H1 (cell line): ENCODE measurements at regions of chr3 and their contacts with region 1.

Region 1: GRCh38 chr3:185733980-185734724 is 90.7 kb downstream of the IGF2BP2 start:
- DNase-seq: no peak
- H3K4me3 ChIP-seq: no peak overlapping the region
- H3K27ac ChIP-seq: no peak overlapping the region
- H3K4me1 ChIP-seq: peaks cover 0 to 15% (median 4%) of the 10 kb centered on the region in 4 experiments; a peak in 5 of 7 replicates
- H3K27me3 ChIP-seq: no peaks in the 10 kb centered on the region
- CTCF ChIP-seq: peak; percentile 8 to 75 (median 71)
- EP300 ChIP-seq: no peak
- POLR2A ChIP-seq: no peak
- RAD21 ChIP-seq: peak; percentile 91 to 93

Region 2: DNA sequence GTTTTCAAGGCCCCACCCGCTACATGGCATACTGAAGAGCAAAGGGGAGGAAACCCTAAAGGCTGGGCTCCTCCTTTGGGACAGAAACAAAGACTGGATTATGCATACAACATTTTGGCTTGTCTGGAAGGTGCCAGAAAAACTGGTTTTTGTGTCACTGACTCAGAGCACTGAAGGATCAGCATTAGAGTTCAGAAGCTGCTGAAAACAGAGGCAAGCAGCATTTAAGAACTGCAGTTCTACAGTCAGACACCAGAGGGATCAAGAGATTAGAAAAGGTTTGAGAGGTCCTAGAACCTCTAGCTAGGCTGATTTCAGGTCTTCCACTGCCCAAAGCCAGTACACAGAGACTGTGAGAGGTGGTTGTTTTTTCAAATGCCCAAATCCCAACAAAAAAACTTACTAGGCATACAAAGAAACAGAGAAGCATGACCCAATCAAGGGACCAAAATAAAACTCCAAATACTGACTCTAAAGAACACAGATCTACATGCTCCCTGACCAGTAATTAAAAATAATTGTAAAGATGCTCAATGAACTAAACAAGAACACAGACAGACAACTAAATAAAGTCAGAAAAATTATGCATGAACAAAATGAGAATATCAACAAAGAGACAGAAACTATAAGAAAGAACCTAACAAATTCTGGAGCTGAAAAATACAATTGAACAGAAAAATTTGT is 56.9 kb before region 1 on chr3:
- CTCF ChIA-PET with region 1: interaction called, 26 read pairs
- POLR2A ChIA-PET with region 1: no interaction called
- DNase-seq: no peak
- H3K4me3 ChIP-seq: no peak overlapping the region
- H3K27ac ChIP-seq: no peak overlapping the region
- H3K4me1 ChIP-seq: no peaks in the 10 kb centered on the region
- H3K27me3 ChIP-seq: no peaks in the 10 kb centered on the region
- CTCF ChIP-seq: peak in 2 of 3 experiments; percentile 71 to 83; a peak in 3 of 4 replicates
- EP300 ChIP-seq: no peak
- POLR2A ChIP-seq: no peak
- RAD21 ChIP-seq: peak; percentile 79 to 85

Region 3: DNA sequence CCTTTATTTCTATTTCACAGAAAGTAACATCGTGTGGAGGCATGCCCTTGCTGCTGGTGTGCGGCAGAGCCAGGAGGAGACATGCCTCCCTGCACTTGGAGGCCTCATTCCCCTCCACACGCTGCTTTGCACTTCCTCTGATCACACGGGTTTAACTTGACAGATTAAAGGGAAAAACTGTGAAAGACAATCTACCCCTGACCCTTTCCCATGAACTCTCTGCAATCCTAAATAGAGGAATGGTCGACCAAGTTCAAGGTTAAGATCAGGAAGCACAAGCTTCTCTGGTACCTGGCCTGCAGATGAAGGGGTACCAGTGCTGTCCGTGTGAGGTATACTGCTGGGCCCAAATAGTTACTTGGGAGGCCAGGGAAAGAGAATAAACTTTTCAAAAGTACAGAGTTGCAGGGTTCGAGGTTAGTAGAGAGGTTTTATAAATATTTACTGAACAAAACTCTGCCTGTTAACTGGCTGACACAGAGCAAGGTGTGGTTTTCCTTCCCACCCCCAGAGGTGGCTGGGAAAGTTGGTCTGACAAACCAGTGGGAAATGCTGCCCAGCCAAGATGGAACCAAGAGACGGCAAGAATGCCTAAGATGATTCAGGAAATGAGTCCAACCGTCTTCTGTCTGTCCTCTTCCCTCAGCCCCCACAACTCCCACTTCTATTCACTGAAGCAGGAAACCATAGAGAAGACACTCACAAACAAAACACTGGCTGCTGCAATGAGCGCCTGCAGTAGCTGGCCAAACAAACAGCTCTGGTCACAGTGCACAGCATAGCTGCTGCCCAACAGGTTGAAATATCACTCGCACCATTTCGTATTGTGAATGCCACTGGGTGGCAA is 11.1 kb after region 1 on chr3:
- CTCF ChIA-PET with region 1: interaction called, 24 read pairs
- POLR2A ChIA-PET with region 1: interaction called, 14 read pairs
- DNase-seq: no peak
- H3K4me3 ChIP-seq: no peak overlapping the region
- H3K27ac ChIP-seq: no peak overlapping the region
- H3K4me1 ChIP-seq: peaks cover 2 to 18% (median 5%) of the 10 kb centered on the region in 4 experiments; a peak in 5 of 7 replicates
- H3K27me3 ChIP-seq: no peaks in the 10 kb centered on the region
- CTCF ChIP-seq: no peak
- EP300 ChIP-seq: no peak
- POLR2A ChIP-seq: no peak
- RAD21 ChIP-seq: no peak

Region 4: GRCh38 chr3:185770109-185770508 is 36.0 kb after region 1 on chr3:
- CTCF ChIA-PET with region 1: interaction called, 345 read pairs
- POLR2A ChIA-PET with region 1: interaction called, 6 read pairs
- DNase-seq: peak in 1 of 2 experiments; percentile 45
- H3K4me3 ChIP-seq: no peak overlapping the region
- H3K27ac ChIP-seq: no peak overlapping the region
- H3K4me1 ChIP-seq: peaks cover 2 to 23% (median 5%) of the 10 kb centered on the region in 4 experiments; a peak in 5 of 7 replicates
- H3K27me3 ChIP-seq: no peaks in the 10 kb centered on the region
- CTCF ChIP-seq: no peak
- EP300 ChIP-seq: no peak
- POLR2A ChIP-seq: no peak
- RAD21 ChIP-seq: no peak

Region 5: DNA sequence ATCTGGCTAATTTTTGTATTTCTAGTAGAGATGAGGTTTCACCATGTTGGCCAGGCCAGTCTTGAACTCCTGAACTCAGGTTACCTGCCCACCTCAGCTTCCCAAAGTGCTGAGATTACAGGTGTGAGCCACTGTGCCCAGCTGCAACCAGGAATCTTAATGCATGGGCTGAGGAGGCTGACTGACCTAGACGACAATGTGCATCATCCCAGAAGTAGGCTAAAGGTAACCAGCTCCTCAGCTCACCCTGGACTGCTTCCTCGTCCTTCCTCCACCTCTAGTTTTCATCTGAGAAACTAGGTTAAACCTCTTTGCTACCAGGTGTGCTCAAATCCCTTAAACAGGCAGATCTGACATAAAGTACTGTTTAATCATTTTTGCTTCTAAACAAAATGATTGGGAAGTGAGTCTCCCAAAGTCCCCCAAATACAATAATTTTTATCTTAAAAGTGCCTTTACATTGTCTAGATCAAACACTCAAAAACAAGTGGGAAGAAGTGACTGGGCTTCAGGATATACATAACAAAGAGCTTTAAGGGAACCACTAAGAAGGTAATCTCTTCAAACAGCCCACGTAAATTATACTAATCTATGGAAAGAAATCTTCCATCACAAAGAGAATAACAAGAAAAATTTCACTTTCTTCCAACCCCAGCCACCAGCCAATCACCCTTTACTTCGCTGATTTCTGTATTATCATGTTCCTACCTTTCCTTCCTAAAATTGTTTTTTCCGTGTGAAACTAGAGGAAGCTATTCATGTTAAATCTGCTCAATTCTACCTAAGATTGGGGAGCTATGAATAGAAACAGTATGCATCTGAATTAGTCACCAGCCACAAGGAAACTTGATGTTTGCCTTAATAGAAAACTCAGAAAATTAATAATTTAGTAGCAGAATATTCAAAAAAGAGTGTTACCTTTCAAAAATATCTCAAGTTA is 56.0 kb after region 1 on chr3:
- CTCF ChIA-PET with region 1: interaction called, 12 read pairs
- POLR2A ChIA-PET with region 1: no interaction called
- DNase-seq: no peak
- H3K4me3 ChIP-seq: peak overlapping the region in 1 of 4 experiments; percentile 33; a peak in 1 of 8 replicates
- H3K27ac ChIP-seq: no peak overlapping the region
- H3K4me1 ChIP-seq: peaks cover 3 to 37% (median 30%) of the 10 kb centered on the region in 4 experiments; a peak in 6 of 7 replicates
- H3K27me3 ChIP-seq: no peaks in the 10 kb centered on the region
- CTCF ChIP-seq: no peak
- EP300 ChIP-seq: no peak
- POLR2A ChIP-seq: no peak
- RAD21 ChIP-seq: no peak

Region 6: GRCh38 chr3:185912929-185913901 is 179.1 kb after region 1 on chr3:
- CTCF ChIA-PET with region 1: interaction called, 9 read pairs
- POLR2A ChIA-PET with region 1: interaction called, 10 read pairs
- DNase-seq: no peak
- H3K4me3 ChIP-seq: no peak overlapping the region
- H3K27ac ChIP-seq: no peak overlapping the region
- H3K4me1 ChIP-seq: no peaks in the 10 kb centered on the region
- H3K27me3 ChIP-seq: no peaks in the 10 kb centered on the region
- CTCF ChIP-seq: no peak
- EP300 ChIP-seq: no peak
- POLR2A ChIP-seq: peak; percentile 57 to 61
- RAD21 ChIP-seq: no peak